Naive thymus-derived CD8-positive, alpha-beta T cell (primary cell): ENCODE measurements at regions of chr22 and their contacts with region 1.

Region 1: GRCh38 chr22:20507253-20508066 is at the start of gene MED15:
- DNase-seq: peak; percentile 76 to 91 (median 84)
- ATAC-seq: peak; percentile 91 to 92
- H3K4me3 Mint-ChIP-seq: peak within 1 kb of the TSS; percentile 94 to 100 (median 97)
- H3K27ac Mint-ChIP-seq: peak within 1 kb of the TSS; percentile 94 to 100 (median 97)
- H3K4me1 Mint-ChIP-seq: peaks cover 35 to 59% (median 53%) of the 10 kb centered on the region in 4 donors
- H3K27me3 Mint-ChIP-seq: no peaks in the 10 kb centered on the region
- polyA plus RNA-seq, gene MED15: 25.4 to 85.2 (median 38.2) TPM

Region 2: GRCh38 chr22:20444325-20444724 is 63.1 kb before region 1 on chr22:
- POLR2A ChIA-PET with region 1: no interaction called
- DNase-seq: no peak
- ATAC-seq: no peak
- H3K4me3 Mint-ChIP-seq: no peak overlapping the region
- H3K27ac Mint-ChIP-seq: no peak overlapping the region
- H3K4me1 Mint-ChIP-seq: peaks cover 0 to 5% (median 3%) of the 10 kb centered on the region in 4 donors
- H3K27me3 Mint-ChIP-seq: peaks cover 0 to 2% (median 0%) of the 10 kb centered on the region in 5 donors

Region 3: GRCh38 chr22:20558567-20559205 is 51.2 kb after region 1 on chr22:
- POLR2A ChIA-PET with region 1: interaction called, 140 read pairs
- DNase-seq: no peak
- ATAC-seq: no peak
- H3K4me3 Mint-ChIP-seq: peak overlapping the region in 7 of 10 donors; percentile 11 to 87 (median 76)
- H3K27ac Mint-ChIP-seq: peak overlapping the region; percentile 91 to 100 (median 98)
- H3K4me1 Mint-ChIP-seq: peaks cover 35 to 82% (median 79%) of the 10 kb centered on the region in 4 donors
- H3K27me3 Mint-ChIP-seq: no peaks in the 10 kb centered on the region

Region 4: GRCh38 chr22:20858615-20859416 is 351.4 kb after region 1 on chr22 and contains the starts of genes PI4KA and SNAP29:
- POLR2A ChIA-PET with region 1: no interaction called
- DNase-seq: peak; percentile 93 to 99 (median 96)
- ATAC-seq: peak; percentile 88 to 91
- H3K4me3 Mint-ChIP-seq: peak within 1 kb of the TSS; percentile 87 to 96 (median 92)
- H3K27ac Mint-ChIP-seq: peak within 1 kb of the TSS; percentile 68 to 95 (median 90)
- H3K4me1 Mint-ChIP-seq: peaks cover 33 to 76% (median 68%) of the 10 kb centered on the region in 4 donors
- H3K27me3 Mint-ChIP-seq: no peaks in the 10 kb centered on the region
- polyA plus RNA-seq, gene PI4KA: 34.4 to 69.6 (median 50.0) TPM
- polyA plus RNA-seq, gene SNAP29: 18.2 to 20.8 (median 18.9) TPM